Activated CD4-positive, alpha-beta memory T cell treated with anti-CD3 and anti-CD28 coated beads, Interleukin-2, amount 10 ng/mL, durations not matched to agents 7 days and 5 days (primary cell): ENCODE measurements at regions of chr16 and their contacts with region 1.

Region 1: DNA sequence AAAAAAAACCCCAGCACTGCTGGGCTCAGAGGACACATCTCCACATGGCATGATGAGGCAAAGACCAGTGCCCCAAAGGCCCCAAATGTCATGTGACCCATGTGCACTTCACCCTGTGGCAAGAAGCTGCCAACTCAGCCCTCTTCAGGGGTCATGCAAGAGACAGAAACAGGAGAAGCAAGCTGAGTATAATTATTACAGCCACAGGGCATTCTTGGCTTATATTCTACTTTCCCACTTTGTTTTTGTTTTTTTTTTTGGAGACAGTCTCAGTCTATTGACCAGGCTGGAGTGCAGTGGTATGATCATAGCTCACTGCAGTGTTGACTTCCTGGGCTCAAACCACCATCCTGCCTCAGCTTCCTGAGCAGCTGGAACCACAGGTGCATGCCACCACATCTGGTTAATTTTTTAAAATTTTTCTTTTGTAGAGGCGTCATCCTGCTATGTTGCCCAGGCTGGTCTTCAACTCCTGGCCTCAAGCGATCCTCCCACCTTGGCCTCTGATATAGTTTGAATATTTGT is 32.7 kb upstream of the LITAF start:
- DNase-seq: peak; percentile 78
- H3K4me3 Mint-ChIP-seq: peak overlapping the region; percentile 37
- H3K27ac Mint-ChIP-seq: peak overlapping the region; percentile 97
- H3K4me1 Mint-ChIP-seq: peaks cover 65% of the 10 kb centered on the region
- H3K27me3 Mint-ChIP-seq: peaks cover 3% of the 10 kb centered on the region

Region 2: GRCh38 chr16:11560701-11561449 is 58.5 kb before region 1 on chr16:
- CTCF ChIA-PET with region 1: no interaction called
- POLR2A ChIA-PET with region 1: interaction called, 12 read pairs
- DNase-seq: peak; percentile 78
- H3K4me3 Mint-ChIP-seq: peak overlapping the region; percentile 70
- H3K27ac Mint-ChIP-seq: peak overlapping the region; percentile 90
- H3K4me1 Mint-ChIP-seq: peaks cover 89% of the 10 kb centered on the region
- H3K27me3 Mint-ChIP-seq: no peaks in the 10 kb centered on the region

Region 3: GRCh38 chr16:11682655-11683096 is 63.3 kb after region 1 on chr16:
- CTCF ChIA-PET with region 1: no interaction called
- POLR2A ChIA-PET with region 1: no interaction called
- DNase-seq: no peak
- H3K4me3 Mint-ChIP-seq: no peak overlapping the region
- H3K27ac Mint-ChIP-seq: peak overlapping the region; percentile 49
- H3K4me1 Mint-ChIP-seq: peaks cover 62% of the 10 kb centered on the region
- H3K27me3 Mint-ChIP-seq: no peaks in the 10 kb centered on the region